Mammary epithelial cell (primary cell): ENCODE measurements at regions of chr5 and their contacts with region 1.

Region 1: DNA sequence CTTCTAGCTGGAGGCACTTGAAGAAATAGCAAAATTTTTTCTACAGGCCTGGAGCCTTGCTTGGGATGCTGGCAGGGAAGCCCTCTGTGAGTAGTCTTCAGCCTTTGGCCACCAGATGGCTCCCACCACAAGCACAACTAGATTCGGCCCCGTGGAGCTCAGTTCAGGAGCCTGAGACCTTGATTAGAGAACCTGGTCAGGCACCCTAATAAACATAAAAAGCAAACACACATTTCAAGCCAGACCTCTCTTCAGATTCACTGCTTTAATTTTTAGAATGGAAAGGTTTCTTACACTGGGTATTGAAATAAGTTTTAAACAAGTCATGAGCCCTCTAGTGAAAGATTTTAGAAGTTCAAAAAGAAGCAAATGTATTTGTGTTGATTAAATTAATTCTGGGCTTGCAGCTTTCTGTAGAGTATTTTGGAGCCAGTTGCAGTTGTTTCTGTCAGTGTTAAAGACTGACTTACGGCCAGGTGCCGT is 41.4 kb downstream of the GLRX start:
- DNase-seq: peak; percentile 57
- H3K4me3 ChIP-seq: no peak overlapping the region
- H3K27ac ChIP-seq: no peak overlapping the region
- H3K4me1 ChIP-seq: no peaks in the 10 kb centered on the region
- H3K27me3 ChIP-seq: no peaks in the 10 kb centered on the region
- CTCF ChIP-seq: peak; percentile 80 to 92

Region 2: DNA sequence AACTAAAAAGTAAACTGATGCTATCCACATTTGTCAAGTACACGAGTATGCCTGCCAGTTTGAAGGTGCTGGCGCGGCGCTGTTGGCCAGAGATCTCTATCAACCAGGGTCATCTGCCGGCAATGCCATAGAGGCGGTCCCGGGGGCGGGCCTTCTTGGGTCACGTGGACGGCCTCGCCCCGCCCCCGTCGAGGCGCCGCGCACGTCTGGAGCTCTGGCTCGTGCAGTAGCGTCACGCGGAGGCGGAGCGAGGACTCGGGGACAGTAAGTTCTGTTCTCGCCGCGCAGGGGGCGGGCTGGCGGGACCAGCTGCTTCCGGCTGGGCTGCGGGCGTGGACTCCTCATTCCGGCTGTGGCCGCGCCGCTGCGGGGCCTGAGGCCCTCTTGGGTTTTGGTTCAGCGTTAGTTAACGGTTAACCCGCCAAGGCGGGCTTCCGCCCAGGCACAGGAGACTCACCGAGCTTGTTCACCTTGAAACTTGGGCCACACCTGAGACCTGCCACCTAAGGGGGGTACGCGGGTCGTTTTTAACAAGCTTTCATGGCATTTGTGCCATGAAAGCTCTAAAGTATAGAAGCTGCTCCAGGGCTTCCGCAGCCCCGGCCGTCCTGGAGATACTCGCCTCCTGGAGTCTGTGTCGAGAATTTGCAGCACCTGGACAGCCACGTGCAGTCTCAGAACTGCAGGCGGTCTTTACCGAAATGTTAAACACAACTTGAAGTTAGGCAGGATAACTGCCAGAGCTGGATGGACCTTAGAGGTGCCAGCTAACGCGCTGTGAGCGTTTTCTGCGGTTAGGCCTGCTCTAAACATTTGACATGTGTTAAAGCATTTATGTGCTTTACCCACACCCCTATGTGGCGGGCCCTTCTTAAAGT is 134.3 kb before region 1 on chr5 and contains the start of gene RFESD:
- CTCF ChIA-PET with region 1: no interaction called
- dilution Hi-C with region 1: no loop called
- in situ Hi-C with region 1: no loop called
- intact Hi-C with region 1: loop called (anchors 1 kb)
- DNase-seq: peak; percentile 91
- H3K4me3 ChIP-seq: peak within 1 kb of the TSS; percentile 37 to 59 (median 51)
- H3K27ac ChIP-seq: peak within 1 kb of the TSS; percentile 84
- H3K4me1 ChIP-seq: no peaks in the 10 kb centered on the region
- H3K27me3 ChIP-seq: no peaks in the 10 kb centered on the region
- CTCF ChIP-seq: peak in 1 of 2 donors; percentile 29
- total RNA-seq, gene RFESD: 2.1 to 3.0 TPM

Region 3: GRCh38 chr5:95664204-95664786 is 116.8 kb before region 1 on chr5:
- CTCF ChIA-PET with region 1: interaction called, 10 read pairs
- dilution Hi-C with region 1: no loop called
- in situ Hi-C with region 1: no loop called
- intact Hi-C with region 1: loop called (anchors 1 kb)
- DNase-seq: peak; percentile 18
- H3K4me3 ChIP-seq: no peak overlapping the region
- H3K27ac ChIP-seq: no peak overlapping the region
- H3K4me1 ChIP-seq: peaks cover 4% of the 10 kb centered on the region
- H3K27me3 ChIP-seq: no peaks in the 10 kb centered on the region
- CTCF ChIP-seq: peak; percentile 79 to 89

Region 4: GRCh38 chr5:95846554-95847260 is 65.6 kb after region 1 on chr5:
- CTCF ChIA-PET with region 1: interaction called, 9 read pairs
- dilution Hi-C with region 1: no loop called
- in situ Hi-C with region 1: loop called (anchors 5 kb)
- intact Hi-C with region 1: loop called (anchors 1 kb)
- DNase-seq: peak; percentile 67
- H3K4me3 ChIP-seq: no peak overlapping the region
- H3K27ac ChIP-seq: no peak overlapping the region
- H3K4me1 ChIP-seq: peaks cover 7% of the 10 kb centered on the region
- H3K27me3 ChIP-seq: no peaks in the 10 kb centered on the region
- CTCF ChIP-seq: peak; percentile 96 to 97

Region 5: GRCh38 chr5:96426831-96427230 is 645.7 kb after region 1 on chr5:
- CTCF ChIA-PET with region 1: interaction called, 12 read pairs
- dilution Hi-C with region 1: no loop called
- in situ Hi-C with region 1: no loop called
- intact Hi-C with region 1: no loop called
- DNase-seq: no peak
- H3K4me3 ChIP-seq: no peak overlapping the region
- H3K27ac ChIP-seq: no peak overlapping the region
- H3K4me1 ChIP-seq: peaks cover 3% of the 10 kb centered on the region
- H3K27me3 ChIP-seq: peaks cover 10% of the 10 kb centered on the region
- CTCF ChIP-seq: no peak

Region 6: GRCh38 chr5:96601811-96602244 is 820.7 kb after region 1 on chr5:
- CTCF ChIA-PET with region 1: no interaction called
- dilution Hi-C with region 1: no loop called
- in situ Hi-C with region 1: no loop called
- intact Hi-C with region 1: loop called (anchors 1 kb)
- DNase-seq: peak; percentile 55
- H3K4me3 ChIP-seq: no peak overlapping the region
- H3K27ac ChIP-seq: no peak overlapping the region
- H3K4me1 ChIP-seq: no peaks in the 10 kb centered on the region
- H3K27me3 ChIP-seq: peaks cover 5% of the 10 kb centered on the region
- CTCF ChIP-seq: peak; percentile 77 to 87